ENCODE measurements at regions of chr9 and their contacts with region 1.

Region 1: DNA sequence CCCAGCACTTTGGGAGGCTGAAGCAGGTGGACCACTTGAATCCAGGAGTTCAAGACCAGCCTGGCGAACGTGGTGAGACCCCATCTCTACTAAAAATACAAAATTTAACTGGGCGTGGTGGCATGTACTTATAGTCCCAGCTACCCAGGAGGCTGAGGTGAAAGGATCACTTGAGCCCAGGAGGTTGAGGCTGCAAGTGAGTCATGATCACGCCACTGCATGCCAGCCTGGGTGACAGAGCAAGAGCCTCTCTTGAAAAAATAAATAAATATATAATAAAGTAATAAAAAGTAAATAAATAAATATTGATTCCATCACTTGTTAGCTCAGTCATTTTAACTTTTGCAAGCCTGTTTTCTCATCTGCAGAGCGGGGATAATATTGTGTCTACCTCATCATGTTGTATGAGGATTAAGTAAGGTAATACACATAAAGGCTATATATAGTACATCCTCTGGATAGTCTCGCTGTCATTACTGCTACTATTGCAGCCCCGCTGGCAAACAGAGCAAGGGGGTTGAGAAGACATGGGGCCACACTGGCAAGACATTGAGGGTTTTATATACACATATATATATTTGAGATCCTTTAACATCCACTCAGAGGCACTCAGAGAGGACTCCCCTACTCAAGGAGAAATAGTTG is 210.9 kb downstream of the C9orf152 start:
- DNase-seq: no peak
- ATAC-seq: no peak

Region 2: GRCh38 chr9:109781541-109782197 is 215.4 kb before region 1 on chr9:
- intact Hi-C with region 1: no loop called
- DNase-seq: no peak
- ATAC-seq: peak; percentile 55

Region 3: GRCh38 chr9:109908459-109909390 is 88.3 kb before region 1 on chr9:
- intact Hi-C with region 1: loop called (anchors 2 kb)
- DNase-seq: no peak
- ATAC-seq: no peak

Measured in Right ventricle myocardium inferior (tissue), 1 donor.